ENCODE measurements at regions of chr15 and their contacts with region 1.

Region 1: DNA sequence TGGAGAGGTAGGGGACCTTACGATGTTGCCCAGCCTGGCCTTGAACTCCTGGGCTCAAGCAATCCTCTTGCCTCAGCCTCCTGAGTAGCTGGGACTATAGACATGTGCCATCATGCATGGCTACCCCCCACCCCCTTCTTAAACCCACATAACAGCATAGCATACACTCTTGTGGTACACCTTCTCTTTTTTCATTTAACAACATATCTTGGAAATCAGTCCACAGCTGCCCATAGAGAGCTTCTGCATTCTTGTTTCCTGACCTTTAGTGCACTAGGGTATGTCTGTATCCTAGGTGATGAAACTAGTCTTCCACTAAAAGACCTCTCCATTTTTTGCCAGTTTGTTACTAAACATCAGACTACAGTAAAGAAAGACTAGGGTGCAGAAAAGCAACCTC is 33.0 kb downstream of the SLC28A1 start:
- DNase-seq: no peak
- H3K4me3 ChIP-seq: no peak overlapping the region
- H3K27ac ChIP-seq: no peak overlapping the region
- H3K4me1 ChIP-seq: peaks cover 9 to 19% of the 10 kb centered on the region in 2 donors
- H3K27me3 ChIP-seq: no peaks in the 10 kb centered on the region
- CTCF ChIP-seq: no peak
- POLR2A ChIP-seq: no peak

Region 2: GRCh38 chr15:84889991-84890669 is 27.3 kb before region 1 on chr15:
- intact Hi-C with region 1: loop called (anchors 2 kb)
- DNase-seq: no peak
- H3K4me3 ChIP-seq: no peak overlapping the region
- H3K27ac ChIP-seq: no peak overlapping the region
- H3K4me1 ChIP-seq: no peaks in the 10 kb centered on the region
- H3K27me3 ChIP-seq: no peaks in the 10 kb centered on the region
- CTCF ChIP-seq: no peak
- POLR2A ChIP-seq: no peak

Region 3: GRCh38 chr15:84934941-84935729 is 17.7 kb after region 1 on chr15:
- intact Hi-C with region 1: no loop called
- DNase-seq: no peak
- H3K4me3 ChIP-seq: no peak overlapping the region
- H3K27ac ChIP-seq: no peak overlapping the region
- H3K4me1 ChIP-seq: no peaks in the 10 kb centered on the region
- H3K27me3 ChIP-seq: no peaks in the 10 kb centered on the region
- CTCF ChIP-seq: no peak
- POLR2A ChIP-seq: no peak

Region 4: GRCh38 chr15:84947947-84948830 is 30.7 kb after region 1 on chr15:
- intact Hi-C with region 1: no loop called
- DNase-seq: no peak
- H3K4me3 ChIP-seq: no peak overlapping the region
- H3K27ac ChIP-seq: peak overlapping the region in 1 of 2 donors; percentile 70
- H3K4me1 ChIP-seq: no peaks in the 10 kb centered on the region
- H3K27me3 ChIP-seq: no peaks in the 10 kb centered on the region
- CTCF ChIP-seq: no peak
- POLR2A ChIP-seq: no peak